BJ (cell line): ENCODE measurements at regions of chr1 and their contacts with region 1.

Region 1: DNA sequence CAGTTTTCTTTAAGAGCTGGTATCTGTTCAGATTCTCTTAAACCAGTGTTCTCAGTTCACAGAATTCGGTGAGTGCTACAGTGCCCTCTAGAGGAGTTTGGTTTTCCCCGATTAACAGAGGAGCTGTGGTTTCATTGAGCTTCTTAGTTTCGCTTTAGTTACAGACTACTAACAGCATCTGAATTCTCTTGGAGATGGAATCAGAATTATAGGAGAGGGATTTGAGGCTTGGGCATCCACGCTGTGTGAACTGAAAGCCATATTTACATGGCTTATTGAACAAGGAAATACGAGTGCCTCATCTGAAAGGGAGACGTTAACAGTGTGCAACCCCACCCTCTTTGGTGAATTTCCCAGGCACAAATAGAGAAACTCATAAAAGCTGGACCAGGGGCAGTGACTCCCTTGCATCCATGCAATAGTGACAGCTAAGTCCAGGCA is 202.0 kb downstream of the USH2A start:
- DNase-seq: peak; percentile 57
- H3K4me3 ChIP-seq: peak overlapping the region; percentile 49
- H3K27me3 ChIP-seq: no peaks in the 10 kb centered on the region
- CTCF ChIP-seq: peak; percentile 79

Region 2: DNA sequence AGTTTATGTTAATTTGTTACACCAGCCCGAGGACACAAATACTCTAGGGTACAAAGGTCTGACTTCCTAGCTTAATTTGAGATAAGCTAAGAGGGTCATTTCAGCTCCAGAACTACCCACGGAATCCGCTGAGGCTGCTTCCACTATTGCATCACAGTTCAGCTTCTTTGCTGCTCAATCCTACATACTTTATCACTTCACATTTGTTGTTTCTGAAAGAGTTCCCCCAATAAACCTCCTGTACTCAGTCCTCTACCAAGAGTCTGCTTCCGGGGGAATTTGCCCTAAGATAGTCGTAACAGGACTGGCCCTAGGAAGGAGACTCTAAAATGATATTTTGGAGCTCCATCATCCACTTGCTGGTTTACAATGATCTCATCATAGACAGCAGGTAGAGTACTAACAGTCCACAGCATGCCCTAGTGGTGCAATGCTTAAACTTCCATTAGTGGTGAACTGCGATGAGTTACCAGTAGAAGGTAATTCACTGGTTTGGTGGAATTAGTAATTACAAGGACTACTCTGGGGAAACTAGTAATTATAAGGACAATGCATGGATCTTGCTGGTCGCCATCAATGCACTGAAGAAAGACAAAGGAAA is 27.3 kb before region 1 on chr1:
- CTCF ChIA-PET with region 1: no interaction called
- POLR2A ChIA-PET with region 1: no interaction called
- DNase-seq: no peak
- H3K4me3 ChIP-seq: no peak overlapping the region
- H3K27me3 ChIP-seq: no peaks in the 10 kb centered on the region
- CTCF ChIP-seq: no peak

Region 3: DNA sequence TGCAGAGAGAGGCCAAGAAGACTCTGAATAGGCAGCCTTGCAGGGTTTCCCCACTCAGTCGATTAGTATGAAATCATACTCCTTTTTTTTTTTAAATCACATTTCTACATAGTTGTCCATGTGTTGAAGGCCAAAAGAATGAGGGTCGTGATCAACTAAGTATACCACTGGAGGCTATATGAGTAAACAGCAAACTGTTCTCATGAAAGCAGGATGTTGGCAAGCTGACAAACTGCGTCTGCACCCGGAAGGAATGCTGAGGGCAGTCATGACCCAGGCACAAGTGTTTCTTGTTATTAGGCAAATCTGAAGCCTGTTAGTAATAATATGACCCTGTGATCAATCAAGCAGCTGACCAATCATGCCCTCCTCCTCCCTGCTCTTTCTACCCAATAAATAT is 11.2 kb before region 1 on chr1:
- CTCF ChIA-PET with region 1: interaction called, 15 read pairs
- POLR2A ChIA-PET with region 1: no interaction called
- DNase-seq: peak; percentile 21
- H3K4me3 ChIP-seq: no peak overlapping the region
- H3K27me3 ChIP-seq: no peaks in the 10 kb centered on the region
- CTCF ChIP-seq: no peak